ENCODE measurements at regions of chr6 and their contacts with region 1.

Region 1: DNA sequence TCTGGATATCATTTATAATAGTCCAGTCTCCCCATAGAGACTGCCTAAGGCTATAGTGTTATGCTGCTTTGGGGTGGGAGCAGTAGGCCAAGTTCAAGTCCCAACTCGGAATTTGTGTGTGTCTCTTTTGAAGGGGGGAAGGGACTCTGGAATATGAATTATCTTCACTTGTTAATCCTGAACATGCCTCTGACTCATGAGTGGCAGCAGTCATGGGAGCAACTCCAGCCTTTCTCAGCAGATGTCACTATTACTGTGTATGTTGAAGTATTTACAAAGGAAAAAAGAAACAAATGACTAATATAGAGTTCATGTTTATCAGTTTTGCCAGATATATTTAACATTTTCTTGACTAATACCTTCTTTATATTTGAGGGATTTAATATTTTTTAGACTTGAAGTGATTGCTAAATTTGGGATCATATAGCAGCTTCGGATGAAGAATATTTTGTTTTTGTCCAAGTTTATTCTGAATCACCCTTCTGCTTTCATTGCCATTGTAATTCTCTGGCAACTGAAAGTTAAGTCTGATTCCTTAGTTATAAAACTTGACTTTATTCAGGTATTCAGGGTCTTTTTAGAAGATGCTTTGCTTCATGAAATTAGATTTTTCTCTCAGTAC is 23.4 kb downstream of the FAM217A start:
- DNase-seq: no peak
- H3K4me3 Mint-ChIP-seq: no peak overlapping the region
- H3K27ac Mint-ChIP-seq: no peak overlapping the region
- H3K4me1 Mint-ChIP-seq: peaks cover 41% of the 10 kb centered on the region
- H3K27me3 Mint-ChIP-seq: no peaks in the 10 kb centered on the region

Region 2: GRCh38 chr6:3623451-3624249 is 431.9 kb before region 1 on chr6:
- intact Hi-C with region 1: no loop called
- DNase-seq: no peak
- H3K4me3 Mint-ChIP-seq: no peak overlapping the region
- H3K27ac Mint-ChIP-seq: no peak overlapping the region
- H3K4me1 Mint-ChIP-seq: no peaks in the 10 kb centered on the region
- H3K27me3 Mint-ChIP-seq: peaks cover 17% of the 10 kb centered on the region

Region 3: GRCh38 chr6:4018172-4018905 is 37.2 kb before region 1 on chr6:
- intact Hi-C with region 1: loop called (anchors 1 kb)
- DNase-seq: peak; percentile 96
- H3K4me3 Mint-ChIP-seq: peak overlapping the region; percentile 99
- H3K27ac Mint-ChIP-seq: peak overlapping the region; percentile 100
- H3K4me1 Mint-ChIP-seq: peaks cover 60% of the 10 kb centered on the region
- H3K27me3 Mint-ChIP-seq: no peaks in the 10 kb centered on the region

Region 4: GRCh38 chr6:4388675-4389074 is 333.1 kb after region 1 on chr6:
- intact Hi-C with region 1: no loop called
- DNase-seq: no peak
- H3K4me3 Mint-ChIP-seq: no peak overlapping the region
- H3K27ac Mint-ChIP-seq: no peak overlapping the region
- H3K4me1 Mint-ChIP-seq: no peaks in the 10 kb centered on the region
- H3K27me3 Mint-ChIP-seq: no peaks in the 10 kb centered on the region

Measured in activated T-helper 1 cell treated with anti-CD3 and anti-CD28 coated beads, Interleukin-12 subunit alpha, Interleukin-12 subunit beta, Interleukin-2, Interleukin-4 antibody, amounts not matched to agents 30 ng/mL and 10 ng/mL and 1 ng/mL, durations not matched to agents 14 hours and 24 hours and 36 hours (primary cell).